Activated CD4-positive, alpha-beta T cell treated with anti-CD3 and anti-CD28 coated beads for 36 hours (primary cell): ENCODE measurements at regions of chr9 and their contacts with region 1.

Region 1: GRCh38 chr9:6757456-6758247 is at the start of gene KDM4C:
- DNase-seq: peak; percentile 97
- ATAC-seq: peak; percentile 84
- H3K4me3 Mint-ChIP-seq: peak within 1 kb of the TSS; percentile 87
- H3K27ac Mint-ChIP-seq: peak within 1 kb of the TSS; percentile 99
- H3K4me1 Mint-ChIP-seq: peaks cover 26% of the 10 kb centered on the region
- H3K27me3 Mint-ChIP-seq: no peaks in the 10 kb centered on the region
- total RNA-seq, gene KDM4C: 31.7 to 33.1 TPM

Region 2: GRCh38 chr9:5832543-5833529 is 924.8 kb before region 1 on chr9 and contains the start of gene ERMP1:
- CTCF ChIA-PET with region 1: no interaction called
- POLR2A ChIA-PET with region 1: no interaction called
- intact Hi-C with region 1: loop called in 1 of 2 experiments (anchors 10 kb)
- DNase-seq: peak; percentile 94
- ATAC-seq: peak; percentile 88
- H3K4me3 Mint-ChIP-seq: peak within 1 kb of the TSS; percentile 91
- H3K27ac Mint-ChIP-seq: peak within 1 kb of the TSS; percentile 84
- H3K4me1 Mint-ChIP-seq: peaks cover 48% of the 10 kb centered on the region
- H3K27me3 Mint-ChIP-seq: no peaks in the 10 kb centered on the region
- total RNA-seq, gene ERMP1: 13.3 to 13.9 TPM

Region 3: DNA sequence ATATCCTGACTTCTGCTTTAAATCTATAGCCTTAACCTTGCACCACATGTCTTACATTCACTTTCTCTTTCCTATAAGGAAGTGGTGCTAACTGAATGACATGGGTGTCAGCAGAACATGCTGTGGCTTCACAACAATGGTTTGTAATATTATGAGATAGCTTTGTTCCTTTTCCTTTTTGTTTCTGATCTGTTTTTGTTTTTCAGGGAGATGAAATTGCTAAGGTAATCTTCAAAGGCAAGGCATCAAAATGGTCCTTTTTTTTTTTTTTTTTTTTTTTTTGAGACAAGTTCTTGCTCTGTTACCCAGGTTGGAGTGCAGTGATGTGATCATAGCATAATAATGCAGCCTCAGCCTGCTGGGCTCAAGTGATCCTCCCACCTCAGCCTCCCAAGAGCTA is 688.7 kb before region 1 on chr9:
- CTCF ChIA-PET with region 1: no interaction called
- POLR2A ChIA-PET with region 1: no interaction called
- intact Hi-C with region 1: loop called in 1 of 2 experiments (anchors 5 kb)
- DNase-seq: peak; percentile 17
- ATAC-seq: peak; percentile 99
- H3K4me3 Mint-ChIP-seq: peak overlapping the region; percentile 27
- H3K27ac Mint-ChIP-seq: peak overlapping the region; percentile 77
- H3K4me1 Mint-ChIP-seq: peaks cover 21% of the 10 kb centered on the region
- H3K27me3 Mint-ChIP-seq: no peaks in the 10 kb centered on the region

Region 4: DNA sequence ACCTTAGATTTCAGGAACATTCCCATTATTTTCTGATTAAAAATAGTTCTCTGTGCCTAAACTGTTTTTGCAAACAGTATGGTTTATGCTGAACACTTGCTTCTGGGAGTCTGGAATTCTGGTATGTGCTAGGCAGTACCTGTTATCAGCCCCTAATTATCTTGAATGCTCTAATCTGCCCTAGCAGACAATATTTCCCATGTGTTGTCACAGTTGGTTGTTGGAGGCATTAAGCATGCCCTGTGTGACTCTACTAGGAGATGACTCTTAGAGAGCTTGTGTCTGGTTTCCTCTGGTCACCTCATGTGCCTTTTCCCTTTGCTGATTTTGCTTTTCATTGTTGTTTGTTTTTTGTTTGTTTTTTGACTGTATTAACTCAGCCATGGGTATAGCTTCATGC is 308.0 kb before region 1 on chr9:
- CTCF ChIA-PET with region 1: no interaction called
- POLR2A ChIA-PET with region 1: no interaction called
- intact Hi-C with region 1: no loop called
- DNase-seq: no peak
- ATAC-seq: peak; percentile 12
- H3K4me3 Mint-ChIP-seq: no peak overlapping the region
- H3K27ac Mint-ChIP-seq: peak overlapping the region; percentile 64
- H3K4me1 Mint-ChIP-seq: peaks cover 54% of the 10 kb centered on the region
- H3K27me3 Mint-ChIP-seq: no peaks in the 10 kb centered on the region

Region 5: GRCh38 chr9:6681147-6681956 is 76.3 kb before region 1 on chr9:
- CTCF ChIA-PET with region 1: interaction called, 3 read pairs
- POLR2A ChIA-PET with region 1: interaction called, 11 read pairs
- intact Hi-C with region 1: loop called (anchors 1 kb)
- DNase-seq: peak; percentile 96
- ATAC-seq: peak; percentile 88
- H3K4me3 Mint-ChIP-seq: peak overlapping the region; percentile 88
- H3K27ac Mint-ChIP-seq: peak overlapping the region; percentile 99
- H3K4me1 Mint-ChIP-seq: peaks cover 19% of the 10 kb centered on the region
- H3K27me3 Mint-ChIP-seq: no peaks in the 10 kb centered on the region

Region 6: DNA sequence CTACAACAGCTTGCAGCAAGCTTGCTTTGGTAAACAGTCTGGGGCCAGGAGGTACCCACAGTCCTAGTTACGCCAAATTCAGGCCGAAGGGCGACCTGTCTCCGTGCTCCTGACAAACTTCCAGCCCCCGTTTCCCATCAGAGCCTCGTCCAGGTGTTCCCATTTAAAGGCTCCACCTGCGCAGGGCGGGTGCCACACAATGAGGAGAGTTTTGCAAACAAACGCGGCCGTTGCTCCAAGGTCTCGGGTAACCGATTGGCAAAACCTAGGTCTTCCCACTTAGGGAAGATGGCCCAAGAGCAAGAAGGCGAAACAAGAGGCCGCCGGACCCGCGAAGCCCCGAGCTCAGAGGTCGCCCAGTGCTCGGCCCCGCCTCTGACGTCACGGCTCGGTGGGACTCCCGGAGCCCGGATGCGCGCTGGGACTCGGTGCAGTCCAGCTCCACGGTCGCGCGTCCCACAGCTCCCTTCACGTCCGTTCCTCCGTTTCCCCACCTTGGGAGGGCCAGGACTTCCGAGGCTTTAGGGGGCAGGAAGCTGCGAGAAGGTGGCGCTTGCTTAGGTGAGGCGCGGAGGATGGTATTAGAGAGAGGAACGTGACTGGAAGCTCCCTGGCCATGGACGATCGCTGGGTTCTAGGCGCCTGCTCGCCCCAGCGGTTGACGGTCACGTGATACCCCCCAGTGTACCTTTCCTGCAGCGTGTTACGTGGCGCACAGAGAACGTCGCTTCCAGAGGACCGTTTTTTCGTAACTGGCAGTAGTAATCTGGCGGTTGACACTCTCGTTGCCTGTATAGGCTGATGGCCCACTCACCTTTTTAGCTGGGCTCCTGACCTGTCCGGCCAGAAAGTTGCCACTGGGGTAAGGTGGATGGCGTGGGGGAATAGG is 41.7 kb before region 1 on chr9:
- CTCF ChIA-PET with region 1: no interaction called
- POLR2A ChIA-PET with region 1: interaction called, 5 read pairs
- intact Hi-C with region 1: loop called in 1 of 2 experiments (anchors 1 kb)
- DNase-seq: peak; percentile 83
- ATAC-seq: peak; percentile 91
- H3K4me3 Mint-ChIP-seq: peak overlapping the region; percentile 76
- H3K27ac Mint-ChIP-seq: peak overlapping the region; percentile 86
- H3K4me1 Mint-ChIP-seq: peaks cover 6% of the 10 kb centered on the region
- H3K27me3 Mint-ChIP-seq: no peaks in the 10 kb centered on the region

Region 7: GRCh38 chr9:7799234-7799943 is 1041.7 kb after region 1 on chr9 and contains the start of gene DMAC1:
- CTCF ChIA-PET with region 1: no interaction called
- POLR2A ChIA-PET with region 1: no interaction called
- intact Hi-C with region 1: loop called in 1 of 2 experiments (anchors 5 kb)
- DNase-seq: peak; percentile 86
- ATAC-seq: peak; percentile 88
- H3K4me3 Mint-ChIP-seq: peak within 1 kb of the TSS; percentile 94
- H3K27ac Mint-ChIP-seq: peak within 1 kb of the TSS; percentile 96
- H3K4me1 Mint-ChIP-seq: peaks cover 27% of the 10 kb centered on the region
- H3K27me3 Mint-ChIP-seq: no peaks in the 10 kb centered on the region
- total RNA-seq, gene DMAC1: 34.5 to 49.3 TPM

Region 8: GRCh38 chr9:8188720-8189407 is 1431.2 kb after region 1 on chr9:
- CTCF ChIA-PET with region 1: no interaction called
- POLR2A ChIA-PET with region 1: no interaction called
- intact Hi-C with region 1: loop called in 1 of 2 experiments (anchors 5 kb)
- DNase-seq: peak; percentile 61
- ATAC-seq: peak; percentile 94
- H3K4me3 Mint-ChIP-seq: no peak overlapping the region
- H3K27ac Mint-ChIP-seq: no peak overlapping the region
- H3K4me1 Mint-ChIP-seq: peaks cover 13% of the 10 kb centered on the region
- H3K27me3 Mint-ChIP-seq: peaks cover 2% of the 10 kb centered on the region